B cell (primary cell): ENCODE measurements at regions of chr10 and their contacts with region 1.

Region 1: GRCh38 chr10:72364239-72364777 is 9.6 kb upstream of the DNAJB12 start:
- DNase-seq: peak; percentile 89
- ATAC-seq: peak; percentile 100
- H3K4me3 ChIP-seq: peak overlapping the region in 4 of 5 experiments; percentile 17 to 33 (median 26)
- H3K4me3 Mint-ChIP-seq: peak overlapping the region; percentile 46
- H3K27ac ChIP-seq: peak overlapping the region; percentile 55 to 70
- H3K27ac Mint-ChIP-seq: peak overlapping the region; percentile 51
- H3K4me1 ChIP-seq: peaks cover 9 to 10% of the 10 kb centered on the region in 2 donors
- H3K4me1 Mint-ChIP-seq: peaks cover 12% of the 10 kb centered on the region
- H3K27me3 ChIP-seq: no peaks in the 10 kb centered on the region
- H3K27me3 Mint-ChIP-seq: no peaks in the 10 kb centered on the region
- CTCF ChIP-seq: peak; percentile 87

Region 2: GRCh38 chr10:72375585-72375984 is 11.3 kb after region 1 on chr10:
- CTCF ChIA-PET with region 1: interaction called, 23 read pairs
- POLR2A ChIA-PET with region 1: no interaction called
- intact Hi-C with region 1: no loop called
- DNase-seq: no peak
- ATAC-seq: no peak
- H3K4me3 ChIP-seq: no peak overlapping the region
- H3K4me3 Mint-ChIP-seq: no peak overlapping the region
- H3K27ac ChIP-seq: no peak overlapping the region
- H3K27ac Mint-ChIP-seq: no peak overlapping the region
- H3K4me1 ChIP-seq: no peaks in the 10 kb centered on the region
- H3K4me1 Mint-ChIP-seq: no peaks in the 10 kb centered on the region
- H3K27me3 ChIP-seq: no peaks in the 10 kb centered on the region
- H3K27me3 Mint-ChIP-seq: no peaks in the 10 kb centered on the region
- CTCF ChIP-seq: no peak

Region 3: GRCh38 chr10:72612203-72612826 is 248.0 kb after region 1 on chr10:
- CTCF ChIA-PET with region 1: no interaction called
- POLR2A ChIA-PET with region 1: no interaction called
- intact Hi-C with region 1: no loop called
- DNase-seq: no peak
- ATAC-seq: no peak
- H3K4me3 ChIP-seq: peak overlapping the region in 1 of 5 experiments; percentile 15
- H3K4me3 Mint-ChIP-seq: peak overlapping the region; percentile 54
- H3K27ac ChIP-seq: peak overlapping the region in 1 of 2 donors; percentile 4
- H3K27ac Mint-ChIP-seq: peak overlapping the region; percentile 75
- H3K4me1 ChIP-seq: peaks cover 4% of the 10 kb centered on the region in 2 donors
- H3K4me1 Mint-ChIP-seq: peaks cover 21% of the 10 kb centered on the region
- H3K27me3 ChIP-seq: no peaks in the 10 kb centered on the region
- H3K27me3 Mint-ChIP-seq: no peaks in the 10 kb centered on the region
- CTCF ChIP-seq: no peak

Region 4: DNA sequence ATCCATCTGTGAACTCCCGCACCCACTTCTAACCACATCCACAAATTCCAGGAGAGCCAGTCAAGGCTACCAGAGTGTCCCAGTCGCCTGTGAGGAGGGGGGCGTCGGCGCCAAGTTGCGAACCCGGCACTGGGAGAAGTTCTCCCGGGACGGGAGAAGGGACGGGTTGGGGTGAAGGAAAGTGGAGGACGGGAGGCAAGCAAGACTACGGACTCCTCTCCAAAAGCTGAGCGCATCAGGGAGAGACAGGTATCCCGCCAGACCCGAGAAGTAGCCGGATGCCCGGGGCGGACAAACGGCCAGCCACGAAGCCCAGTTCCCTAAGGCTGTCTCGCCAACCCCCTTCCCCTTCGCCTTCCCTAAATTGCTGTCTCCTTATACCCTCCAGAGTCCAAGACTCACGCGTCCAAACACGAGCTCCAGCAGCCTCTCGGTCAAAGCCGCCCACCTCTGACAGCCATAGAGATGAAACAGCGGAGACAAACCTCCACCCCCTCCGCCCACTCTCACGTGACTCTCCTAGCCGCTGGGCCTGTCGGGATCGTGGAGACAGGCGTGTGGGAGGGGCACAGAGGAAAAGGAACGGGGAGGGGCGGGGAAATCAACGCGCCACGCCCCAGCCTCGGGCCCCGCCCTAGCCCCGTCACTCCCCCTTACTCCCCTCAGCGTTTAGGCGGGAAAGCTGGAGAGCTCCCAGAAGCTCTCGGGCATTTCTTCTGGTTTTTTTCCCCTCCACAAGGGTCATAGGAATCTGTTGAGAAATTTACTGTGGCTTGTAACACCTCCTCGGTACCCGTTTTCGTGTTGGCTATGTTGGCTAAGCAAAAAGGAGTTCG is 261.5 kb after region 1 on chr10 and contains the start of gene MICU1:
- CTCF ChIA-PET with region 1: interaction called, 3 read pairs
- POLR2A ChIA-PET with region 1: no interaction called
- intact Hi-C with region 1: loop called (anchors 5 kb)
- DNase-seq: peak; percentile 95
- ATAC-seq: peak; percentile 99
- H3K4me3 ChIP-seq: peak within 1 kb of the TSS; percentile 72 to 99 (median 89)
- H3K4me3 Mint-ChIP-seq: peak within 1 kb of the TSS; percentile 99
- H3K27ac ChIP-seq: peak within 1 kb of the TSS; percentile 52 to 81
- H3K27ac Mint-ChIP-seq: peak within 1 kb of the TSS; percentile 92
- H3K4me1 ChIP-seq: peaks cover 8 to 9% of the 10 kb centered on the region in 2 donors
- H3K4me1 Mint-ChIP-seq: peaks cover 13% of the 10 kb centered on the region
- H3K27me3 ChIP-seq: no peaks in the 10 kb centered on the region
- H3K27me3 Mint-ChIP-seq: no peaks in the 10 kb centered on the region
- CTCF ChIP-seq: no peak
- total RNA-seq, gene MICU1: 34.7 and 42.9 TPM in 2 replicates

Region 5: GRCh38 chr10:72834183-72834825 is 470.0 kb after region 1 on chr10:
- CTCF ChIA-PET with region 1: interaction called, 100 read pairs
- POLR2A ChIA-PET with region 1: no interaction called
- intact Hi-C with region 1: no loop called
- DNase-seq: peak; percentile 68
- ATAC-seq: no peak
- H3K4me3 ChIP-seq: no peak overlapping the region
- H3K4me3 Mint-ChIP-seq: no peak overlapping the region
- H3K27ac ChIP-seq: no peak overlapping the region
- H3K27ac Mint-ChIP-seq: no peak overlapping the region
- H3K4me1 ChIP-seq: no peaks in the 10 kb centered on the region
- H3K4me1 Mint-ChIP-seq: peaks cover 2% of the 10 kb centered on the region
- H3K27me3 ChIP-seq: no peaks in the 10 kb centered on the region
- H3K27me3 Mint-ChIP-seq: no peaks in the 10 kb centered on the region
- CTCF ChIP-seq: peak; percentile 71

Region 6: GRCh38 chr10:73060738-73061635 is 696.7 kb after region 1 on chr10:
- CTCF ChIA-PET with region 1: interaction called, 17 read pairs
- POLR2A ChIA-PET with region 1: no interaction called
- intact Hi-C with region 1: loop called (anchors 1 kb)
- DNase-seq: peak; percentile 49
- ATAC-seq: no peak
- H3K4me3 ChIP-seq: no peak overlapping the region
- H3K4me3 Mint-ChIP-seq: no peak overlapping the region
- H3K27ac ChIP-seq: no peak overlapping the region
- H3K27ac Mint-ChIP-seq: no peak overlapping the region
- H3K4me1 ChIP-seq: no peaks in the 10 kb centered on the region
- H3K4me1 Mint-ChIP-seq: peaks cover 7% of the 10 kb centered on the region
- H3K27me3 ChIP-seq: no peaks in the 10 kb centered on the region
- H3K27me3 Mint-ChIP-seq: no peaks in the 10 kb centered on the region
- CTCF ChIP-seq: peak; percentile 67